ENCODE measurements at regions of chr11 and their contacts with region 1.

Region 1: DNA sequence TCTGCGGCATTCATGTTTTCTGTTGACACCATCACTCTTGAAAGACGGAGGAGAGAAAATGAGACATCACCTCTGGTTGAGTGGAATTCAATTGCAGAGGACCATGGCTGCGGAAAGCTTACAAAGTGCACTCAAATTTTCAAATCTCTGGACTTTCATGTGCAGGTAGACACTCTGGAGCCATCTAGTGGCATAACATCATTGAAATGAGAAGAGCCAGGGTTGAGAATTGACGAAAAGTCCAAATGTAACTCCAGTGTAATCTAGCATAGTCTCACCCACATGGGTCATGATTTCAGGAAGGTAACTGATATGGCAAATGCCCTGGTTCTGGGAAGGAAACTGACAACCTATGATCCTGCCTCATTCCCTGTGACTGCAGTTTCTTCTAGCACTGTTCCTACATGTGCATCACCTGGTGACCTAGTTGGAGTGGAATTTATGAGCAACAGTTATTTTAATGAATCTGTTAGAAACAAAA is 687.8 kb downstream of the KCNA4 start:
- DNase-seq: no peak
- H3K4me3 ChIP-seq: no peak overlapping the region
- CTCF ChIP-seq: peak; percentile 70

Region 2: GRCh38 chr11:29159552-29160465 is 169.2 kb before region 1 on chr11:
- CTCF ChIA-PET with region 1: interaction called, 71 read pairs
- POLR2A ChIA-PET with region 1: no interaction called
- DNase-seq: peak; percentile 36
- H3K4me3 ChIP-seq: no peak overlapping the region
- CTCF ChIP-seq: peak; percentile 68

Region 3: GRCh38 chr11:29184939-29185890 is 143.8 kb before region 1 on chr11:
- CTCF ChIA-PET with region 1: interaction called, 10 read pairs
- POLR2A ChIA-PET with region 1: interaction called, 4 read pairs
- DNase-seq: peak; percentile 96
- H3K4me3 ChIP-seq: no peak overlapping the region; the same call in 1 of the 2 replicates
- CTCF ChIP-seq: no peak

Region 4: DNA sequence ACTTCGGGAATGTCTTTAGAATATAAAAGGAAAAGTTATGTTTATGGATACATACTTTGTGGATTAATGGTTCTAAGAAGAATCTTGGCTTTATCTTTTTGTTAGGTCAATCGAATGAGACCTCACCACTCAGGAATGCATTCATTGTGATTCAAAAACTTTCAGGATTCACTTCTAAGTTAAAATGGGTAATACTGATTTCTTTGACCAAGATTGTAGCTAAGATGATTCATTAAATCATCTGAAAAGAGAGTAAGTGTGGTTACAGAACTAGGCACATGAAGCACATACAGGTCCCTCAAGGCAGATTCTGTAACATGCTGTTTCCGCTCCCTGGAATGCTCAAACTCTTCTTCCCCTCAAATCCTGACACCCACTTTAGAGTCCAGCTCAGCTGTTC is 28.6 kb before region 1 on chr11:
- CTCF ChIA-PET with region 1: interaction called, 15 read pairs
- POLR2A ChIA-PET with region 1: no interaction called
- DNase-seq: peak; percentile 67
- H3K4me3 ChIP-seq: no peak overlapping the region
- CTCF ChIP-seq: no peak

Region 5: GRCh38 chr11:29368126-29368525 is 39.1 kb after region 1 on chr11:
- CTCF ChIA-PET with region 1: no interaction called
- POLR2A ChIA-PET with region 1: no interaction called
- DNase-seq: no peak
- H3K4me3 ChIP-seq: no peak overlapping the region
- CTCF ChIP-seq: no peak

Measured in AG04449 (cell line).